ENCODE measurements at regions of chr1 and their contacts with region 1.

Region 1: GRCh38 chr1:204363335-204364124 is 3.8 kb upstream of the PLEKHA6 start:
- DNase-seq: peak; percentile 86
- ATAC-seq: peak; percentile 95
- H3K4me3 ChIP-seq: peak overlapping the region; percentile 39 to 71 (median 51)
- H3K4me3 Mint-ChIP-seq: peak overlapping the region; percentile 35
- H3K27ac ChIP-seq: no peak overlapping the region
- H3K27ac Mint-ChIP-seq: no peak overlapping the region
- H3K4me1 ChIP-seq: peaks cover 10 to 17% of the 10 kb centered on the region in 2 donors
- H3K4me1 Mint-ChIP-seq: peaks cover 8% of the 10 kb centered on the region
- H3K27me3 ChIP-seq: peaks cover 0 to 44% (median 13%) of the 10 kb centered on the region in 4 experiments
- H3K27me3 Mint-ChIP-seq: peaks cover 55% of the 10 kb centered on the region
- CTCF ChIP-seq: peak; percentile 95

Region 2: GRCh38 chr1:203504397-203505250 is 858.9 kb before region 1 on chr1:
- CTCF ChIA-PET with region 1: no interaction called
- POLR2A ChIA-PET with region 1: no interaction called
- intact Hi-C with region 1: loop called (anchors 10 kb)
- DNase-seq: peak; percentile 80
- ATAC-seq: peak; percentile 72
- H3K4me3 ChIP-seq: no peak overlapping the region
- H3K4me3 Mint-ChIP-seq: no peak overlapping the region
- H3K27ac ChIP-seq: no peak overlapping the region
- H3K27ac Mint-ChIP-seq: no peak overlapping the region
- H3K4me1 ChIP-seq: no peaks in the 10 kb centered on the region
- H3K4me1 Mint-ChIP-seq: peaks cover 2% of the 10 kb centered on the region
- H3K27me3 ChIP-seq: peaks cover 0 to 7% (median 0%) of the 10 kb centered on the region in 4 experiments
- H3K27me3 Mint-ChIP-seq: peaks cover 16% of the 10 kb centered on the region
- CTCF ChIP-seq: peak; percentile 93

Region 3: GRCh38 chr1:204162231-204163074 is 201.1 kb before region 1 on chr1:
- CTCF ChIA-PET with region 1: interaction called, 99 read pairs
- POLR2A ChIA-PET with region 1: no interaction called
- intact Hi-C with region 1: loop called (anchors 1 kb)
- DNase-seq: peak; percentile 78
- ATAC-seq: peak; percentile 92
- H3K4me3 ChIP-seq: no peak overlapping the region
- H3K4me3 Mint-ChIP-seq: no peak overlapping the region
- H3K27ac ChIP-seq: no peak overlapping the region
- H3K27ac Mint-ChIP-seq: no peak overlapping the region
- H3K4me1 ChIP-seq: no peaks in the 10 kb centered on the region
- H3K4me1 Mint-ChIP-seq: no peaks in the 10 kb centered on the region
- H3K27me3 ChIP-seq: peaks cover 0 to 17% (median 3%) of the 10 kb centered on the region in 4 experiments
- H3K27me3 Mint-ChIP-seq: peaks cover 32% of the 10 kb centered on the region
- CTCF ChIP-seq: peak; percentile 98

Region 4: GRCh38 chr1:204257954-204258752 is 105.4 kb before region 1 on chr1:
- CTCF ChIA-PET with region 1: interaction called, 21 read pairs
- POLR2A ChIA-PET with region 1: no interaction called
- intact Hi-C with region 1: loop called (anchors 1 kb)
- DNase-seq: peak; percentile 29
- ATAC-seq: no peak
- H3K4me3 ChIP-seq: no peak overlapping the region
- H3K4me3 Mint-ChIP-seq: no peak overlapping the region
- H3K27ac ChIP-seq: no peak overlapping the region
- H3K27ac Mint-ChIP-seq: no peak overlapping the region
- H3K4me1 ChIP-seq: no peaks in the 10 kb centered on the region
- H3K4me1 Mint-ChIP-seq: no peaks in the 10 kb centered on the region
- H3K27me3 ChIP-seq: peaks cover 0 to 3% (median 0%) of the 10 kb centered on the region in 4 experiments
- H3K27me3 Mint-ChIP-seq: peaks cover 19% of the 10 kb centered on the region
- CTCF ChIP-seq: peak; percentile 28

Region 5: GRCh38 chr1:204353213-204353910 is 10.2 kb before region 1 on chr1:
- CTCF ChIA-PET with region 1: interaction called, 12 read pairs
- POLR2A ChIA-PET with region 1: no interaction called
- intact Hi-C with region 1: no loop called
- DNase-seq: no peak
- ATAC-seq: no peak
- H3K4me3 ChIP-seq: no peak overlapping the region
- H3K4me3 Mint-ChIP-seq: no peak overlapping the region
- H3K27ac ChIP-seq: no peak overlapping the region
- H3K27ac Mint-ChIP-seq: no peak overlapping the region
- H3K4me1 ChIP-seq: peaks cover 0 to 10% of the 10 kb centered on the region in 2 donors
- H3K4me1 Mint-ChIP-seq: peaks cover 8% of the 10 kb centered on the region
- H3K27me3 ChIP-seq: peaks cover 0 to 12% (median 2%) of the 10 kb centered on the region in 4 experiments
- H3K27me3 Mint-ChIP-seq: peaks cover 22% of the 10 kb centered on the region
- CTCF ChIP-seq: no peak

Region 6: DNA sequence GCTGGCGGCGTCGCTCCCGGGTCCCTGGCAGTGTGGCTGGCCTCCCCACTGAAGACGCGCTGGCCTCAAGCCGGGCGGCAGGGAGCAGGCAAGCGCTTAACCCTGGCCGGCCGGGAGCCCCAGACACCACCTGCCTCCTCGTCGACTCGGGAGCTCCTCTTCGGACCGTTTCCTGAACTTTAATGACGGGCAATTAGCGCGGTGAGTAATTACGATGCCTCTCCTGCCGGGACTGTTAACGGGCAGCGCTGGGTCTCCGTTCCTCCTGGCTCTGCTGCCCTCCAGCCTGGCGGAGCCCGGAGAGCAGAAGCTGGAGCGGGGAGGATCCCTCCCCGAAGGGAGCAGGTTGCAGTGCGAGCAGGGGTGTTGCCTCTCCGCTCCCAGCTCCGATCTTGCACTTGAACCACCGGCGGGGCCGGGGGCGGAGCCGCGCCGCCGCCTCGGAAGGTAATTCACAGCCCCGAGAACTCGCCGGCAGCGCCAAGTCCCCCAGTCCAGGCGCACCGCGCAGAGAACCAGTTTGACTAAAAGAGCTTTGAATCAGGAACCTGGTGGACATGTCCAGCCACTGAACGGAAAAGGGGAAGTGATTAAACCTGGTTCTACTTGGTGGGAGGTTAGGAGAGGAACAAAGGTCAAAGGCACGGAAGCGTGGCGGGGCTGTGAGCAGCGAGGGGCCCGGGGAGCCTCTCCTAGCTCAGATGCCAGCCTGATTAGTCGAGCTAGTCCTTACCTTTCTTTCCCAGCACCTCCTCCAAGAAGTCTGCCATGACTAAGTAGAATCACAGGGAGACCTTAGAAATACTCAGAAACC is 14.5 kb after region 1 on chr1:
- CTCF ChIA-PET with region 1: interaction called, 15 read pairs
- POLR2A ChIA-PET with region 1: no interaction called
- intact Hi-C with region 1: no loop called
- DNase-seq: peak; percentile 56
- ATAC-seq: peak; percentile 77
- H3K4me3 ChIP-seq: peak overlapping the region in 4 of 5 experiments; percentile 36 to 63 (median 58)
- H3K4me3 Mint-ChIP-seq: peak overlapping the region; percentile 87
- H3K27ac ChIP-seq: no peak overlapping the region
- H3K27ac Mint-ChIP-seq: peak overlapping the region; percentile 29
- H3K4me1 ChIP-seq: peaks cover 13 to 22% of the 10 kb centered on the region in 2 donors
- H3K4me1 Mint-ChIP-seq: peaks cover 17% of the 10 kb centered on the region
- H3K27me3 ChIP-seq: peaks cover 0 to 47% (median 17%) of the 10 kb centered on the region in 4 experiments
- H3K27me3 Mint-ChIP-seq: peaks cover 29% of the 10 kb centered on the region
- CTCF ChIP-seq: no peak

Region 7: DNA sequence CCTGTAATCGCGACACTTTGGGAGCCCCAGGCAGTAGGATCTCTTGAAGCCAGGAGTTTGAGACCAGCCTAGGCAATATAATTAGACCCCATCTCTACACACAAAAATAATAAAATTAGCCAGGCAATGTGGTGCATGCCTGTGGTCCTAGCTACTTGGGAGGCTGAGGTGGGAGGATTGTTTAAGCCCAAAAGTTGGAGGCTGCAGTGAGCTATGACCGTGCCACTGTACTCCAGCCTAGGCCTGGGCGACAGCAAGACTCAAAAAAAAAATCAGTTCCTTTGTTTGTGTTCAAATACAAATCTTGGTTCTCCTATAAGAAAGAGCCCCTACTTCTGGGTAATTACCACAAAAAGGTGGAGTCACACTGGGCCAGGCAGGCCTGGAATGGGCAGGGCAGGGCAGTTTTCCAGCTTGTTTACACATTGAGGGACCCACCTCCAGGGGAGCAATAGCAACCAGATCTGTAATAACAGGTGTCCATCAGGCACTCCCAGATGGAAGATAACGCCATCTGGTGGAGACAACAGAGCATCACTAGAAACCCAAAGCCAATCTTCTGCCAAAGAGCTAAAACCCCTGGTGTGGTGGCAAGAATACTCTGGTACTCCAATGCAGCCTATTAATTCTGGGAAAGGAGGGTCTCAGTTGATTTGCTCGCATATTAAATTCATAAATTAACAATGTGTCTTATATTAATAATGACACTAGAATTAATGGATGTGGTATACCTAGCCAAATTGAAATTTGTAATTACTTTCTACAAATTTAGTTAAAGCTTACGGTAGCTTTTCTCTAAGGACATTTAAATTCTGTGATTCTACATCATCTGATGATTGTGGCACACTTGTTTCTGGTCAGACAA is 34.9 kb after region 1 on chr1:
- CTCF ChIA-PET with region 1: interaction called, 19 read pairs
- POLR2A ChIA-PET with region 1: no interaction called
- intact Hi-C with region 1: no loop called
- DNase-seq: peak; percentile 81
- ATAC-seq: peak; percentile 95
- H3K4me3 ChIP-seq: no peak overlapping the region
- H3K4me3 Mint-ChIP-seq: no peak overlapping the region
- H3K27ac ChIP-seq: peak overlapping the region; percentile 46 to 59
- H3K27ac Mint-ChIP-seq: peak overlapping the region; percentile 84
- H3K4me1 ChIP-seq: peaks cover 0 to 4% of the 10 kb centered on the region in 2 donors
- H3K4me1 Mint-ChIP-seq: peaks cover 2% of the 10 kb centered on the region
- H3K27me3 ChIP-seq: no peaks in the 10 kb centered on the region
- H3K27me3 Mint-ChIP-seq: no peaks in the 10 kb centered on the region
- CTCF ChIP-seq: peak; percentile 85

Region 8: DNA sequence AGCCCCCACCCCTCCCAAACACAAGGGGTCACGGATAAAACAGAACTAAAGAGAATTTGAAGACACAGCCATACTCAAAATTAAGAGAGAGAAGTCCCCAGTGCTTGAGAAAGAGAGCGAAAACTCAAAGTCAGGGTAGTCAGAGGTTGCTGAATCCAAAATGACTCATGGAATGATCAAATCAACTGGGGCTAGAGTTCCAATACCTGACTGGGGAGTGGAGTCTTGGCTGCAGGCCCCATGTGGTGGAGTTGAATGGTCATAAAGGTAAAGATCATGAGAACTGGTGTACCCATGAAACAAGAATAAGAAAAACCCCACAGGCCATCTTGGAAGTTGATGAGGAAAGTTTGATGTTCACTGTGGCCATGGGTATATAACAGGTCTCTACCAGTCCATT is 406.5 kb after region 1 on chr1:
- CTCF ChIA-PET with region 1: no interaction called
- POLR2A ChIA-PET with region 1: no interaction called
- intact Hi-C with region 1: no loop called
- DNase-seq: no peak
- ATAC-seq: no peak
- H3K4me3 ChIP-seq: no peak overlapping the region
- H3K4me3 Mint-ChIP-seq: no peak overlapping the region
- H3K27ac ChIP-seq: no peak overlapping the region
- H3K27ac Mint-ChIP-seq: no peak overlapping the region
- H3K4me1 ChIP-seq: no peaks in the 10 kb centered on the region
- H3K4me1 Mint-ChIP-seq: no peaks in the 10 kb centered on the region
- H3K27me3 ChIP-seq: peaks cover 0 to 23% (median 8%) of the 10 kb centered on the region in 4 experiments
- H3K27me3 Mint-ChIP-seq: peaks cover 41% of the 10 kb centered on the region
- CTCF ChIP-seq: no peak